ENCODE measurements at regions of chr3 and their contacts with region 1.

Region 1: DNA sequence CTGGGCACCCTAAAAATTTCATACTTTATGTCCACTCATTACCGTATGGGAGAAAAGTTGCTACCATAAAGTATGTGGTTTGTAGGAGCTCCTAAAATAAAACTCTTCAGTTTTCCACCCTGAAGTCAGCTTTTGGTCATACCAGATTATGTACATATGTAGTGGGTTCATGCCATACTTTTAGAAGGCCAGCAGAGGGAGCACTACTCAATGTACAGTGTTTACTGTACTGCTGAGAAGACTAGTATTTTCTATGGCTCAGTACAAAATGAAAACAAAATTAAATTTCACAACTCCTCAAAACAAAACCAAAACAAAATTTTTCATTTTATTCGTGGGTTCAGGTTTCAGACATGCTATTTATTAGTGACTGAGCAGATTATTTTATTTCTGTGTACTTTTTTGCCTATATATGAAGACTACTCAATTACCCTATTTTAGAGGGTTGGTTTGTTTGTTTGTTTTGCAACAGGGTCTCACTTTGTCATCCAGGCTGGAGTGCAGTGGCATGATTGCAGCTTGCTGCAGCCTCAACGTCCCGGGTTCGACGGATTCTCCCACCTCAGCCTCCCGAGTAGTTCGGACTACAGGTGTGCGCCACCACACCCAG is 24.3 kb downstream of the NXPE3 start:
- DNase-seq: peak; percentile 67
- CTCF ChIP-seq: peak; percentile 79

Region 2: GRCh38 chr3:101633176-101633575 is 170.1 kb before region 1 on chr3:
- CTCF ChIA-PET with region 1: no interaction called
- POLR2A ChIA-PET with region 1: no interaction called
- DNase-seq: no peak
- CTCF ChIP-seq: no peak

Region 3: DNA sequence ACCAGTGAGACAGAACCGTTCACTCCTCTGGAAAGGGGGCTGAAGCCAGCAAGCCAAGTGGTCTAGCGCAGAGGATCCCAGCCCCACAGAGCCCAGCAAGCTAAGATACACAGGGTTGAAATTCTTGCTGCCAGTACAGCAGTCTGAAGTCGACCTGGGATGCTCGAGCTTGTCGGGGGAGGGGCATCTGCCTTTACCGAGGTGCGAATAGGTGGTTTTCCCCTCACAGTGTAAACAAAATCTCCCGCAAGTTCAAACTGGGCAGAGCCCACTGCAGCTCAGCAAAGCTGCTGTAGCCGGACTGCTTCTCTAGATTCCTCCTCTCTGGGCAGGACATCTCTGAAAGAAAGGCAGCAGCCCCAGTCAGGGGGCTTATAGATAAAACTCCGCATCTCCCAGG is 67.4 kb before region 1 on chr3:
- CTCF ChIA-PET with region 1: no interaction called
- POLR2A ChIA-PET with region 1: no interaction called
- DNase-seq: no peak
- CTCF ChIP-seq: no peak

Region 4: DNA sequence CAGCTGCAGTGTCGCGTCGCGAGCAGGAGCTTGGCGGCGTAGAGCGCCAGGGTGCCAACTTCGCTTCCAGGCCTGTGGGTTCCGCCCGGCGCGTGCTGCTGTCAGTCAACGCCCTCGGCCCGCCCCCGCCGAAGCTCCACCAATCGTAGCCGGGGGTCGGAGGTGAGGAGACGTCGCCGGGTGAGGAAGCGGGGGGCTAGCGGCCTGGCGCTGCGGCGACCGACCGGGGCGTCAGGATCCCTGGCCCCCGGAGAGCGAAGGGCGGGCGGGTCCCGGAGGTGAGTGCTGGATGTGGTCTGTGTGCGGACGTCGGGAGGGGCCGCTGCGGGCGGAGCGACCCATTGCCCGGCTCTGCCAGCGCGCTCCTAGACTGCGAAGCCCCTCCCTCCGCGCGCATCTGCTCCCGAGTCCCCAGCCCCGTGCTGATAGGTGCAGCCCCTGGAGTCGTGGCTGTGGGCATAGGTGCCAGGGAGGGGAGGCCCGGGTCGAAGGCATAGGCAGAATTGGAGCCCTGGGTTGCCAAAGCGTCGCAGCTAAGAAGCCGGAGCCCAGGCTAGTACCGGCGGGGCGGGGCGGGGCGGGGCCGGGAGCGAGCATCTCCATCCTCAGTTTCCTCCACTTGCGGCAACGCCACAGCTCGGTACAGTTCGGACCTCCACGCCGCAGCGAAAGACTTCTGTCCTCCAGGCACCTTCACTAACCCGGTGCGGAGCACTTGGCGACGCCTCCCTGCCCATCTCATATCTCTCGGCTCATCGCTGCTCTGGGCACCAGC is 24.0 kb before region 1 on chr3 and contains the start of gene NXPE3:
- CTCF ChIA-PET with region 1: interaction called, 28 read pairs
- POLR2A ChIA-PET with region 1: no interaction called
- DNase-seq: peak; percentile 91
- CTCF ChIP-seq: no peak

Region 5: DNA sequence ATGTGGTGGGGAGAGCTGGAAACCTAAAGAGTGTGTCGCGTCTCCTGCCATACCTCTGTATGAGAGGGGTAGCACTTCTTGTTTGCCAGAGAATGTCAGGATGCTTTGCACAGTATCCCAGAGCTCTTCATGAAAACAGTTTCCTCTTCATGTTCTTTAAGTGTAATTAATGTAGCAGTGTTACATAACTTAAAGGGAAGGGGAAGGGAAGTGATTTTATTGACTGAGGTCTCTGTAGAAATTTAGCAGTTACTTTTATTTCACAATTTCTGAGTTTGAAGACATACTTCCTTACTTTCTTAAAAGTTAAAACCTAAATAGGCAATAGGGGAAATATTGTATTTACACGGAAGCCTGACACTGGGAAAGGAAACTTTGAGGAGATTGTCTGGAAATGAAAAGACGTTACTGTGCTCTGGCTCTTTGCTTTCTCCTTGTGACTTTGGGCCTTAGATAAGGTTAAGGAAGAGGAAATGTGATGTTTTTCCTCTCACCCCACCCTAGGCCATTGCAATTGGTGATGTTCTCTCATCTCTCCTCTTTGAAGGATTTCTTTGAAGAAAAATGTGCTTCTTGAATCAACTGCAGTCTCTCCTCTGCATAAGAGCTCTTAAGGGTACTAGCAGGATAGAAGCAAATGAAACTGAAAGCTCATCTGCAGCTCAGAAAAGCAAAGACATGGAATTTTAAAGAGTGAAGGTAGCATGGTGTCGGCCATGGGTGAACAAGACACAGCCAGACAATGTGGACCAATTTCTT is 18.2 kb before region 1 on chr3:
- CTCF ChIA-PET with region 1: interaction called, 28 read pairs
- POLR2A ChIA-PET with region 1: no interaction called
- DNase-seq: no peak
- CTCF ChIP-seq: no peak

Region 6: GRCh38 chr3:101791778-101792177 is 11.5 kb before region 1 on chr3:
- CTCF ChIA-PET with region 1: interaction called, 28 read pairs
- POLR2A ChIA-PET with region 1: no interaction called
- DNase-seq: peak; percentile 27
- CTCF ChIP-seq: no peak

Region 7: DNA sequence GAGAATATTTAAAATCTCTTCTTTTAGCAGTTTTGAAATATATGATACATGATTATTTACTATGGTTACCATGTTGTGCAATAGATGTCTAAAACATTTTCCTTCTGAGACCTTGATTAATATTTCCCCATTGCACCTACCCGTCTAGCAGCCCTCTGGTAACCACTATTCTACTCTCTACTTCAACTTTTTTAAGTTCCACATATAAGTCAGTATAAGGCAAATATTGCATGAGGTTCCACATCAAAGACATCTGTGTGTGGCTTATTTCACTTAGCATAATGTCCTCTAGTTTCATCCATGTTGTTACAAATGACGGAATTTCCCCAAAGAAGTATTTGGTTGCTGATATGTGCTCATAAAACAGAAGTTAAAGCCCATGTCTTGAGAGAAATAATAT is 16.5 kb after region 1 on chr3:
- CTCF ChIA-PET with region 1: interaction called, 67 read pairs
- POLR2A ChIA-PET with region 1: no interaction called
- DNase-seq: no peak
- CTCF ChIP-seq: no peak

Region 8: GRCh38 chr3:101827211-101828174 is 24.2 kb after region 1 on chr3:
- CTCF ChIA-PET with region 1: interaction called, 67 read pairs
- POLR2A ChIA-PET with region 1: no interaction called
- DNase-seq: peak; percentile 80
- CTCF ChIP-seq: no peak

Region 9: GRCh38 chr3:102536456-102536855 is 733.2 kb after region 1 on chr3:
- CTCF ChIA-PET with region 1: interaction called, 16 read pairs
- POLR2A ChIA-PET with region 1: no interaction called
- DNase-seq: peak; percentile 17
- CTCF ChIP-seq: peak; percentile 51

Measured in GM10248 (cell line).